ENCODE measurements at regions of chr4 and their contacts with region 1.

Region 1: GRCh38 chr4:10684631-10685030 is at the start of gene CLNK:
- DNase-seq: no peak
- ATAC-seq: peak; percentile 74
- H3K4me3 Mint-ChIP-seq: peak within 1 kb of the TSS; percentile 78
- H3K27ac Mint-ChIP-seq: peak within 1 kb of the TSS; percentile 87
- H3K4me1 Mint-ChIP-seq: peaks cover 55% of the 10 kb centered on the region
- H3K27me3 Mint-ChIP-seq: no peaks in the 10 kb centered on the region
- CTCF ChIP-seq: no peak
- total RNA-seq, gene CLNK: 0.37 and 0.58 TPM in 2 replicates

Region 2: GRCh38 chr4:10466161-10466560 is 218.5 kb before region 1 on chr4:
- CTCF ChIA-PET with region 1: no interaction called
- POLR2A ChIA-PET with region 1: no interaction called
- intact Hi-C with region 1: no loop called
- DNase-seq: no peak
- ATAC-seq: no peak
- H3K4me3 Mint-ChIP-seq: no peak overlapping the region
- H3K27ac Mint-ChIP-seq: no peak overlapping the region
- H3K4me1 Mint-ChIP-seq: peaks cover 11% of the 10 kb centered on the region
- H3K27me3 Mint-ChIP-seq: peaks cover 42% of the 10 kb centered on the region
- CTCF ChIP-seq: no peak

Region 3: GRCh38 chr4:10730590-10730989 is 46.0 kb after region 1 on chr4:
- CTCF ChIA-PET with region 1: no interaction called
- POLR2A ChIA-PET with region 1: no interaction called
- intact Hi-C with region 1: loop called (anchors 5 kb)
- DNase-seq: no peak
- ATAC-seq: no peak
- H3K4me3 Mint-ChIP-seq: no peak overlapping the region
- H3K27ac Mint-ChIP-seq: no peak overlapping the region
- H3K4me1 Mint-ChIP-seq: peaks cover 65% of the 10 kb centered on the region
- H3K27me3 Mint-ChIP-seq: no peaks in the 10 kb centered on the region
- CTCF ChIP-seq: no peak